Panc1 (cell line): ENCODE measurements at regions of chrX and their contacts with region 1.

Region 1: GRCh38 chrX:153662266-153662665 is 11.3 kb downstream of the PNCK start:
- DNase-seq: no peak
- ATAC-seq: peak; percentile 82
- H3K4me3 ChIP-seq: peak overlapping the region in 1 of 2 experiments; percentile 23; a peak in 2 of 4 replicates
- H3K27ac ChIP-seq: no peak overlapping the region
- H3K4me1 ChIP-seq: no peaks in the 10 kb centered on the region
- H3K27me3 ChIP-seq: peaks cover 4% of the 10 kb centered on the region; the same call in 1 of the 2 replicates
- CTCF ChIP-seq: peak; percentile 75

Region 2: GRCh38 chrX:153539171-153539978 is 122.9 kb before region 1 on chrX:
- CTCF ChIA-PET with region 1: interaction called, 21 read pairs
- POLR2A ChIA-PET with region 1: no interaction called
- in situ Hi-C with region 1: no loop called
- intact Hi-C with region 1: loop called (anchors 5 kb)
- DNase-seq: peak; percentile 28
- ATAC-seq: peak; percentile 94
- H3K4me3 ChIP-seq: no peak overlapping the region
- H3K27ac ChIP-seq: no peak overlapping the region
- H3K4me1 ChIP-seq: no peaks in the 10 kb centered on the region; the same call in 1 of the 2 replicates
- H3K27me3 ChIP-seq: no peaks in the 10 kb centered on the region
- CTCF ChIP-seq: no peak